ENCODE measurements at regions of chr17 and their contacts with region 1.

Region 1: GRCh38 chr17:7523033-7523432 is 25.8 kb upstream of the TNFSF12 start:
- DNase-seq: peak in 8 of 9 donors; percentile 34 to 58 (median 48)
- ATAC-seq: peak; percentile 64
- H3K4me3 ChIP-seq: no peak overlapping the region
- H3K4me3 Mint-ChIP-seq: no peak overlapping the region
- H3K27ac ChIP-seq: no peak overlapping the region
- H3K27ac Mint-ChIP-seq: peak overlapping the region in 4 of 9 donors; percentile 42 to 84 (median 51)
- H3K4me1 ChIP-seq: no peaks in the 10 kb centered on the region
- H3K4me1 Mint-ChIP-seq: peaks cover 3 to 6% (median 5%) of the 10 kb centered on the region in 7 donors
- H3K27me3 ChIP-seq: no peaks in the 10 kb centered on the region
- H3K27me3 Mint-ChIP-seq: peaks cover 0 to 2% (median 0%) of the 10 kb centered on the region in 5 donors

Region 2: DNA sequence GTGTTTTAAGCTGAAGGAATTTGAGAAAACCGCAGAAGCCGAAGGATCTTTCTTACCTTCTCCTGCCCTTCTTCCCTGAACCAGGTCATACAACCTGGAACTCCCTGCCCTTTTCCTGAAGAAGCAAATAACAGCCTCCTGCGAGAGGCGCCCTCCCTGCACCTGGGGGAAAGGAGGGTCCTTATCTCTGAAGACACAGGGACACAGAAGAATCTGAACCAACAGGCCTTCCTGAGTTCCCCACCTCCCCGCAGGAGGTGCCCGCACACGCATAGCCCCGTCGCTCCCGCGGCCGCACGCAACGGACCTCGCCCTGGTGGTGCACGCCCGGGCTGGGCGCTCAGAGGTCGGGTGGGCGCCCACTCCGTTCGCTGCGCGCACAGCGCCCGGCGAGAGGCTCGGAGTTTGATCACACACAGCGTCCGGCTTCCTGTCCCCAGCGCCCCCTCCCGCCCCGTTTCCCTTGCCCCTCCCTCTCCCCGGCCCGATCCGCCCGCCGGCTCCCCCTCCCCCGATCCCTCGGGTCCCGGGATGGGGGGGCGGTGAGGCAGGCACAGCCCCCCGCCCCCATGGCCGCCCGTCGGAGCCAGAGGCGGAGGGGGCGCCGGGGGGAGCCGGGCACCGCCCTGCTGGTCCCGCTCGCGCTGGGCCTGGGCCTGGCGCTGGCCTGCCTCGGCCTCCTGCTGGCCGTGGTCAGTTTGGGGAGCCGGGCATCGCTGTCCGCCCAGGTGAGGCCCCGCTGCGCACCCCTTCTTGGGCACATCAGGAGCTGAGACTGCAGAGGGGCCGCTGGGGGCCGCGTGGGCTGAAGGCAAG is 25.8 kb after region 1 on chr17 and contains the start of gene TNFSF12:
- CTCF ChIA-PET with region 1: interaction called, 4 read pairs
- POLR2A ChIA-PET with region 1: interaction called, 6 read pairs
- intact Hi-C with region 1: loop called (anchors 1 kb)
- DNase-seq: peak in 7 of 9 donors; percentile 38 to 69 (median 45)
- ATAC-seq: peak; percentile 60
- H3K4me3 ChIP-seq: peak within 1 kb of the TSS; percentile 91
- H3K4me3 Mint-ChIP-seq: peak within 1 kb of the TSS; percentile 77 to 99 (median 91)
- H3K27ac ChIP-seq: peak within 1 kb of the TSS; percentile 70
- H3K27ac Mint-ChIP-seq: peak within 1 kb of the TSS; percentile 90 to 98 (median 94)
- H3K4me1 ChIP-seq: peaks cover 14 to 35% of the 10 kb centered on the region in 2 donors
- H3K4me1 Mint-ChIP-seq: peaks cover 46 to 60% (median 55%) of the 10 kb centered on the region in 7 donors
- H3K27me3 ChIP-seq: no peaks in the 10 kb centered on the region
- H3K27me3 Mint-ChIP-seq: peaks cover 0 to 2% (median 0%) of the 10 kb centered on the region in 5 donors
- total RNA-seq, gene TNFSF12: 27.3 to 82.4 (median 36.9) TPM

Region 3: GRCh38 chr17:7589204-7589868 is 66.3 kb after region 1 on chr17:
- CTCF ChIA-PET with region 1: interaction called, 4 read pairs
- POLR2A ChIA-PET with region 1: interaction called, 4 read pairs
- intact Hi-C with region 1: loop called in 1 of 2 experiments (anchors 2 kb)
- DNase-seq: peak; percentile 54 to 72 (median 63)
- ATAC-seq: peak; percentile 87
- H3K4me3 ChIP-seq: no peak overlapping the region
- H3K4me3 Mint-ChIP-seq: no peak overlapping the region
- H3K27ac ChIP-seq: no peak overlapping the region
- H3K27ac Mint-ChIP-seq: peak overlapping the region in 2 of 9 donors; percentile 13 to 38
- H3K4me1 ChIP-seq: peaks cover 8 to 11% of the 10 kb centered on the region in 2 donors
- H3K4me1 Mint-ChIP-seq: peaks cover 9 to 14% (median 13%) of the 10 kb centered on the region in 7 donors
- H3K27me3 ChIP-seq: no peaks in the 10 kb centered on the region
- H3K27me3 Mint-ChIP-seq: no peaks in the 10 kb centered on the region

Region 4: GRCh38 chr17:9261081-9262012 is 1738.3 kb after region 1 on chr17:
- CTCF ChIA-PET with region 1: no interaction called
- POLR2A ChIA-PET with region 1: no interaction called
- intact Hi-C with region 1: no loop called
- DNase-seq: no peak
- ATAC-seq: no peak
- H3K4me3 ChIP-seq: no peak overlapping the region
- H3K4me3 Mint-ChIP-seq: no peak overlapping the region
- H3K27ac ChIP-seq: no peak overlapping the region
- H3K27ac Mint-ChIP-seq: peak overlapping the region in 1 of 9 donors; percentile 59
- H3K4me1 ChIP-seq: no peaks in the 10 kb centered on the region
- H3K4me1 Mint-ChIP-seq: peaks cover 5 to 21% (median 9%) of the 10 kb centered on the region in 7 donors
- H3K27me3 ChIP-seq: no peaks in the 10 kb centered on the region
- H3K27me3 Mint-ChIP-seq: no peaks in the 10 kb centered on the region

Measured in naive thymus-derived CD4-positive, alpha-beta T cell (primary cell).